Activated CD4-positive, alpha-beta T cell treated with anti-CD3 and anti-CD28 coated beads, Interleukin-2, amount 10 ng/mL, durations not matched to agents 7 days and 5 days (primary cell): ENCODE measurements at regions of chr22 and their contacts with region 1.

Region 1: DNA sequence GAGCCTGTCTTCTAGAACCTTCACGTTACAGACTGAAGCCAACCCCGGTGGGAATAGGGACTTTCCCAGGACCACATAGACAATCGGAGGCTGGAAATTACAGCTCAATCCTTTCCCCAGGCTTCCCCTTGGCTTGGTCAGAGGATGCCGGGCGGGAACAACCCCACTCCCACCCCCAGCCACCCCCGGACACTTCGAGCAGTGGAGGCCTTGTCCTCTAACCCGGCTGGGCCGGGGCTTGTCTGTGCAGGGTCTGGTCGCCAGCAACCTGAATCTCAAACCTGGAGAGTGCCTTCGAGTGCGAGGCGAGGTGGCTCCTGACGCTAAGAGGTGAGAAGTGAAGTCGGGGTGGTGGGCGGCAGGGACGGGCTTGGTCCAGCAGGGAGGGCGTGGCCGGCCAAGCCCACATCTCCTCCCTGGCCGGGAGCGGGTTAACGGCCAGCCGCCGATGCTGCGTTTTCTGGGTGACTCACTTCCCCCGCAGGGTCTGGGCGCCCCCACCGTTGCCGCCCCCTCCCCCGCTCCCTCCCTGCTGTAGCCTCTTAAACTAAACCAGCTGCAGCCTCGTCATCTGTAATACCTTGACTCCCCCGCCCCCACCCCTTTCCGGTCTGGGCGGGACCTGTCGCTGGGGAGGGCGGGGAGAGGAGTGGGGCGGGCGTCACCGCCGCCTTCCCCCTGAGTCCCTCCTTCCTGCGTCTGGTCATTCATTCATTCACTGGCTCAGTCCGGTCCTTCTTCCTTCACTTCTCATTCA is 1.5 kb downstream of the LGALS1 start:
- DNase-seq: peak; percentile 94
- H3K4me3 Mint-ChIP-seq: peak overlapping the region; percentile 93
- H3K27ac Mint-ChIP-seq: peak overlapping the region; percentile 100
- H3K4me1 Mint-ChIP-seq: peaks cover 72% of the 10 kb centered on the region
- H3K27me3 Mint-ChIP-seq: no peaks in the 10 kb centered on the region

Region 2: GRCh38 chr22:37428649-37429586 is 248.0 kb before region 1 on chr22:
- CTCF ChIA-PET with region 1: no interaction called
- POLR2A ChIA-PET with region 1: no interaction called
- DNase-seq: peak; percentile 60
- H3K4me3 Mint-ChIP-seq: no peak overlapping the region
- H3K27ac Mint-ChIP-seq: no peak overlapping the region
- H3K4me1 Mint-ChIP-seq: peaks cover 17% of the 10 kb centered on the region
- H3K27me3 Mint-ChIP-seq: peaks cover 53% of the 10 kb centered on the region

Region 3: DNA sequence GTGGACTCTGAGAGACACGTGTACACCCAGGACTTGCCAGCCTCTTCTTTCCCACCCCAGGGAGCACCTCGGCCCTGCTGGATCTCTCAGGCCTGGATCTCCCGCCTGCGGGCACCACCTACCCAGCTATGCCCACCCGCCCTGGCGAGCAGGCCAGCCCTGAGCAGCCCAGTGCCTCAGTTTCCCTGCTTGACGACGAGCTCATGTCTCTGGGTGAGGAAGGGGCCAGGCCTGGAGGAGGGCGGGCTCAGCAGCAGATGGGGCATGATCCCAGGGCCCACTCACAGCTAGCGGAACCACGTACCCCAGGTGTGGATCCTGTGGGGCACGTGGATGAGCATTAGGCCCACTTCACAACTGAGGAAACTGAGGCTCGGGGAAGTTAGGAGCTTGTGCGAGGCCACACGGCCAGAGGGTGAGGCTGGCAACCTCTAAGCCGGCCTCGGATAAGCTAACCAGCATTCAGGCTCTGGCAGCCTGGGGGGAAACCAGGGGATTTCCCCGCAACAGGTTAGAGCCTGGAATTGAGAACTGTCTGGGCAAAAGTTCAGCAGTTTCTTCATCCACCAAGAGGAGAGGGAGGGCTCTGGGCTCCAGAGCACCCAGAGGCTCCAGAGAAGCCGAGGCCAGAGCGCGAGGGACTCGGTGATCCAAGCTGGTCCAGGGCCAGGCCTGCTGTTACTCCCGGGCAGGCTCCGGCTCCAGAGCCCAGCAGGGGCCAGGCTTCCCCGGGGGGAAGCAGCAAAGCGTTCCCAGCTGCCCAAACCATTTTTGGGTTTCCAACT is 51.0 kb before region 1 on chr22:
- CTCF ChIA-PET with region 1: interaction called, 6 read pairs
- POLR2A ChIA-PET with region 1: interaction called, 11 read pairs
- DNase-seq: no peak
- H3K4me3 Mint-ChIP-seq: no peak overlapping the region
- H3K27ac Mint-ChIP-seq: peak overlapping the region; percentile 89
- H3K4me1 Mint-ChIP-seq: peaks cover 50% of the 10 kb centered on the region
- H3K27me3 Mint-ChIP-seq: no peaks in the 10 kb centered on the region

Region 4: DNA sequence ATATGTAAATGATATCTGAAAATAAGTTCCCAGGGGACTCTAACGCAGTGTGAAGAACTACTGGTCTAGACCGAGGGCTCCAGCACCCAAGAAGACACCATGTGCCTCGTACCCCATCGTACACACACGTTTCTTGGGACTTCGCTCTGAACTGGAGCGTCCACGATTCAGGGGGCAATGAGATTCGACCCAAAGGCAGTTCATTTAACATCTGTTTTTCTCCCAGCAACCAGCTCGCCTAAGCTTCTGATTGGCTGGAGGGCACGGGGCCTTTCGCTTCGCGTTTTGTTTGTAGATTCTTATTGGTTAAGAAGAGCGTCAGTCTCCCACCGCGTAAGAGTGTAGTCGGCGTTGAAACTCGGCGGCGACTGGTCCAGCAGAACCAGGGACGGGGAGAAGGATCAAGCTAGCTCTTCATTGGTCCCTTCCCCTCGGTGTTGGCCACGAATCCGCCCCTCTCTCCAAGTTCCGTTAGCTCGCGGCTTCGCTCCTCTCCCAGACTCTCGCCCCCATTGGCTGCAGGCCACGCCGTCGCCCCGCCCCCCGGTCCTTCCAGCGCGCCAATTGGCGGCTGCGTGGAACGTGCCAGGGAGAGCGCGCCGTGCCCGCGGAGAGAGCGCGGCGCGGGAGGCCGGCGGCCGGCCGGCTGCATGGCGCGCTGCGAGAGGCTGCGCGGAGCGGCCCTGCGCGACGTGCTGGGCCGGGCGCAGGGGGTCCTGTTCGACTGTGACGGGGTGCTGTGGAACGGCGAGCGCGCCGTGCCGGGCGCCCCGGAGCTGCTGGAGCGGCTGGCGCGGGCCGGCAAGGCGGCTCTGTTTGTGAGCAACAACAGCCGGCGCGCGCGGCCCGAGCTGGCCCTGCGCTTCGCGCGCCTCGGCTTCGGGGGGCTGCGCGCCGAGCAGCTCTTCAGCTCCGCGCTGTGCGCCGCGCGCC is 18.5 kb before region 1 on chr22 and contains the start of gene PDXP:
- CTCF ChIA-PET with region 1: interaction called, 27 read pairs
- POLR2A ChIA-PET with region 1: interaction called, 9 read pairs
- DNase-seq: peak; percentile 99
- H3K4me3 Mint-ChIP-seq: peak within 1 kb of the TSS; percentile 85
- H3K27ac Mint-ChIP-seq: peak within 1 kb of the TSS; percentile 87
- H3K4me1 Mint-ChIP-seq: peaks cover 42% of the 10 kb centered on the region
- H3K27me3 Mint-ChIP-seq: no peaks in the 10 kb centered on the region
- total RNA-seq, gene PDXP: 21.5 to 21.8 TPM

Region 5: GRCh38 chr22:37696657-37697537 is 20.0 kb after region 1 on chr22 and contains the start of gene TRIOBP:
- CTCF ChIA-PET with region 1: interaction called, 10 read pairs
- POLR2A ChIA-PET with region 1: no interaction called
- DNase-seq: peak; percentile 94
- H3K4me3 Mint-ChIP-seq: peak within 1 kb of the TSS; percentile 62
- H3K27ac Mint-ChIP-seq: peak within 1 kb of the TSS; percentile 36
- H3K4me1 Mint-ChIP-seq: peaks cover 17% of the 10 kb centered on the region
- H3K27me3 Mint-ChIP-seq: no peaks in the 10 kb centered on the region
- total RNA-seq, gene TRIOBP: 44.1 to 53.5 TPM